Dorsolateral prefrontal cortex (tissue), 120 donors: ENCODE measurements at regions of chr7 and their contacts with region 1.

Region 1: GRCh38 chr7:54326592-54327167 is 215.5 kb upstream of the VSTM2A start:
- DNase-seq: no peak
- H3K4me3 ChIP-seq: no peak overlapping the region
- H3K27ac ChIP-seq: no peak overlapping the region
- H3K27me3 ChIP-seq: no peaks in the 10 kb centered on the region
- CTCF ChIP-seq: no peak

Region 2: GRCh38 chr7:54037873-54038272 is 288.8 kb before region 1 on chr7:
- intact Hi-C with region 1: no loop called
- DNase-seq: no peak
- H3K4me3 ChIP-seq: no peak overlapping the region
- H3K27ac ChIP-seq: no peak overlapping the region
- H3K27me3 ChIP-seq: no peaks in the 10 kb centered on the region
- CTCF ChIP-seq: no peak

Region 3: GRCh38 chr7:54252256-54253035 is 74.2 kb before region 1 on chr7:
- intact Hi-C with region 1: loop called in 1 of 2 experiments (anchors 10 kb)
- DNase-seq: no peak
- H3K4me3 ChIP-seq: no peak overlapping the region
- H3K27ac ChIP-seq: no peak overlapping the region
- H3K27me3 ChIP-seq: no peaks in the 10 kb centered on the region
- CTCF ChIP-seq: no peak

Region 4: GRCh38 chr7:54292171-54292925 is 34.3 kb before region 1 on chr7:
- intact Hi-C with region 1: no loop called
- DNase-seq: no peak
- H3K4me3 ChIP-seq: no peak overlapping the region
- H3K27ac ChIP-seq: no peak overlapping the region
- H3K27me3 ChIP-seq: no peaks in the 10 kb centered on the region
- CTCF ChIP-seq: no peak

Region 5: GRCh38 chr7:54354436-54354835 is 27.8 kb after region 1 on chr7:
- intact Hi-C with region 1: no loop called
- DNase-seq: no peak
- H3K4me3 ChIP-seq: no peak overlapping the region
- H3K27ac ChIP-seq: no peak overlapping the region
- H3K27me3 ChIP-seq: no peaks in the 10 kb centered on the region
- CTCF ChIP-seq: no peak